Sigmoid colon (tissue), 7 donors: ENCODE measurements at regions of chr4 and their contacts with region 1.

Region 1: GRCh38 chr4:145097821-145098674 is at the starts of genes ABCE1 and ANAPC10:
- DNase-seq: peak; percentile 98
- H3K4me3 ChIP-seq: peak within 1 kb of the TSS; percentile 69 to 85 (median 78)
- H3K27ac ChIP-seq: peak within 1 kb of the TSS; percentile 86 to 94 (median 92)
- H3K4me1 ChIP-seq: peaks cover 0 to 53% (median 41%) of the 10 kb centered on the region in 4 donors
- H3K27me3 ChIP-seq: no peaks in the 10 kb centered on the region
- CTCF ChIP-seq: no peak
- EP300 ChIP-seq: peak in 1 of 4 donors; percentile 24
- POLR2A ChIP-seq: peak; percentile 28 to 32
- total RNA-seq, gene ABCE1: 41.4 to 58.2 (median 50.4) TPM
- total RNA-seq, gene ANAPC10: 16.3 to 31.4 (median 22.9) TPM

Region 2: DNA sequence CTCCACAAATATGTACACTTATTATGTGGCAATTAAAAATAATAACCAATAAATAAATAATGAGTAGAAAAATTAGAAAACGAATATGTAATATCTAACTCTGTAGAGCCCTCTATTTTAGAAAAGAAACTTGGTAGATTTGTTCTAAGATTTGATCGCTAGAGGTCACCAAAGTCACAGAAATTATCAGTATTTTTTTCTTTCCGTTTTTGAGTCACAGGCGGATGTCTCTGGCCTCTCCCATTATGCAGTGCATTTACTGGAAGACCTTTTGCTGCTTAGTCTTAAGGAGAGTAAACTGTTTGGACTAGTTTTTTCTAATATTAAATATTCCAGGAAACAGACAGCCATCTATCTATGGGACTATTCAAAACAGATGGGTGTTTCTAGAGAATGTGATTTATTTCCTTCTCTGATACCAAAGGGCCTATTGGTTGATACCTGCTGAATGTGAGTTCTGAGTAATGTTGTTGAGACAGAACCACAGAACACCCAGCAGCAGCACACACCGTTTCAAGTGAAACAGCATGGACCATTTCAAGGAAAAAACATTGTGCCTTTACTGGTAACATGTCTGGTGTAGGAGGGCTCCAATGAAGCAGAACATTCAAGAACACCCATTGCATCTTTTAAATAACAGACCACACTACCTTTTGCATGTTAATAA is 923.5 kb before region 1 on chr4:
- intact Hi-C with region 1: loop called (anchors 10 kb)
- DNase-seq: no peak
- H3K4me3 ChIP-seq: no peak overlapping the region
- H3K27ac ChIP-seq: no peak overlapping the region
- H3K4me1 ChIP-seq: peaks cover 0 to 4% (median 2%) of the 10 kb centered on the region in 4 donors
- H3K27me3 ChIP-seq: no peaks in the 10 kb centered on the region
- CTCF ChIP-seq: peak in 2 of 4 experiments; percentile 24 to 43
- EP300 ChIP-seq: no peak
- POLR2A ChIP-seq: no peak

Region 3: DNA sequence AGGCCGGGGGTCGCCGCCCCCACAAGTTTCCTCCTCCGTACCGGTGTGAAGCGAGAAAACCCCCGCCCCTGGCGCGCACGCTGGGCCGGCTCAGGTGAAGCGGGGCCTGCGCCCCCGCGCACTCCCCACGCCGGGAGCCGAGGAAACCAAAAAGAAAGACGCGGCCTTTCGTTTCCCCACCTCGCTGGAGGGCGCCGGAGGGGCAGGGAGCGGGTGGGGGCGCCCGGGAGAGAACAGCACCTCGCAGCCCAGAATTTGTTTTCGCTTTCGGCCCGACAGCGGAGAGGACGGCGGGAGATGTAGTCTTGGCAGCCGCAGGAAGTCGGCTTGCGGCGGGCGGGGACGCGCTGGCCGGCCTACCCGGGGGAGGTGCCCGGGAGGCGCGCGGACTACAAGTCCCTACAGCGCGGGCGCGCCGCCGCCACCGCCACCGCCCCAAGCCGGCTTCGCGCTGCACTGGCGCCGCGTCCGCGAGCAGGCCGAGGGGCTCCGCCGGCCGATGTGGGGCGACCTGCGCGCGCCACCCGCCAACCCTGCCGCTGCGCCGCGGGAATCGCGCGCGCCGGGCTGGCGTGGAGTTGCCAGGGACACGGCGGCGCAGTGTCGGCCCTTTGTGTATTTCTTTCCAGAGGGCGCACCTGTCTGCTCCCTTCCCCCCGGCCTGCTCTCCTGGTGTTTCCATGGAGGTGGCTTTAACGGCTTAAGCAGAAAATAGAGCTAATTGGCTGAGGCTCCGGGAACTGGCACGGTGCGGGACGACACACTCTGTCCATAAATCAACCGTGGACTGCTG is 82.4 kb after region 1 on chr4 and contains the start of gene OTUD4:
- intact Hi-C with region 1: loop called (anchors 2 kb)
- DNase-seq: peak; percentile 98
- H3K4me3 ChIP-seq: peak within 1 kb of the TSS; percentile 85 to 98 (median 91)
- H3K27ac ChIP-seq: peak within 1 kb of the TSS; percentile 97 to 99 (median 98)
- H3K4me1 ChIP-seq: peaks cover 0 to 40% (median 32%) of the 10 kb centered on the region in 4 donors
- H3K27me3 ChIP-seq: no peaks in the 10 kb centered on the region
- CTCF ChIP-seq: no peak
- EP300 ChIP-seq: no peak
- POLR2A ChIP-seq: peak; percentile 61 to 67
- total RNA-seq, gene OTUD4: 27.7 to 31.7 (median 29.8) TPM

Region 4: DNA sequence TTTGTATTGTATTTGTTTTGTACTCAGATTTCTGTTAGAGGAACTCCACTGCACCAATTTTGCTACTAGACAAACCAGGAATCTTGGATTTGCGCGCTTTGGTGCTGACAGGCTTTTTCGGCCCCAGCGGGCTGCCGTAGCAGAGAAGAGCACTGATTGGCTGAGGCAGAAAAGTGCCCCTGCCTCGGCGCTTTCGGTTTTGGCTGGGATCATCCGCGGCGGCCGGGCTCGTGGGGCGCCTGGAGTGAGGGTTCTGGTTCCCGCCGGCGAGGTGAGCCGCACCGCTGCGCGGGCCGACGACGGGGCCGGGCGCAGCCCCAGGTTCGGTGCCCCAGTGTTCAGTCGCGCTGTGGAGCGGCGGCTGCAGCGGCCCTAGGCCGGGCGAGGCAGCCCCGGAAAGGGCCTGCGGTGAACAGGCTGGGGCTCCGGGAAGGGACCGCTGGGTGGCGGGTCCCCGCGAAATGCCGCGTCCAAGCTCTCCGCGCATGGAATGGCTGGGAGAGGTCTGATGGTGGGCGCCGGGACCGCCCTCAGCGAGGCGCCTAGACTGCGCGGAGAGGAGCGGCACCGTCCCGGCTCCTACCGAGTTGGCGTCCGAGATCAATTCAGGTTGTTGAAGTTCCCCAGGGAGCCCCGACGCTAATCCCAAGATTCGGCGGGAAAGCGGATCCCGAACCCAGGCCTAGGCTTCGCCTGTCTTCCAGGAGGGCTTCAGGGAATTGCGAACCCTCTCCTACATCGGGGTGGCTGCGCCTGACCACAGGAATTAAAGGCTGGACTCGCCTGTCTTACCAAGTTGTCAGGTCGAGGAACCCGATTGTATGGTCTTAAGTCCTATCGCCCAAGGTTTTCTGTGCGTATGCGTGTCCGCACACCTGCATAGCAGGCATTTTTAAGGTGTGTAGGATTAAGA is 1077.7 kb after region 1 on chr4 and contains the start of gene LSM6:
- intact Hi-C with region 1: loop called (anchors 10 kb)
- DNase-seq: peak; percentile 91
- H3K4me3 ChIP-seq: peak within 1 kb of the TSS; percentile 87 to 92 (median 88)
- H3K27ac ChIP-seq: peak within 1 kb of the TSS; percentile 93 to 95 (median 93)
- H3K4me1 ChIP-seq: peaks cover 0 to 42% (median 33%) of the 10 kb centered on the region in 4 donors
- H3K27me3 ChIP-seq: no peaks in the 10 kb centered on the region
- CTCF ChIP-seq: no peak
- EP300 ChIP-seq: peak in 2 of 4 donors; percentile 13 to 33
- POLR2A ChIP-seq: peak in 1 of 2 donors; percentile 15
- total RNA-seq, gene LSM6: 16.9 to 51.5 (median 32.4) TPM